Transverse colon (tissue), 4 donors: ENCODE measurements at regions of chr13 and their contacts with region 1.

Region 1: DNA sequence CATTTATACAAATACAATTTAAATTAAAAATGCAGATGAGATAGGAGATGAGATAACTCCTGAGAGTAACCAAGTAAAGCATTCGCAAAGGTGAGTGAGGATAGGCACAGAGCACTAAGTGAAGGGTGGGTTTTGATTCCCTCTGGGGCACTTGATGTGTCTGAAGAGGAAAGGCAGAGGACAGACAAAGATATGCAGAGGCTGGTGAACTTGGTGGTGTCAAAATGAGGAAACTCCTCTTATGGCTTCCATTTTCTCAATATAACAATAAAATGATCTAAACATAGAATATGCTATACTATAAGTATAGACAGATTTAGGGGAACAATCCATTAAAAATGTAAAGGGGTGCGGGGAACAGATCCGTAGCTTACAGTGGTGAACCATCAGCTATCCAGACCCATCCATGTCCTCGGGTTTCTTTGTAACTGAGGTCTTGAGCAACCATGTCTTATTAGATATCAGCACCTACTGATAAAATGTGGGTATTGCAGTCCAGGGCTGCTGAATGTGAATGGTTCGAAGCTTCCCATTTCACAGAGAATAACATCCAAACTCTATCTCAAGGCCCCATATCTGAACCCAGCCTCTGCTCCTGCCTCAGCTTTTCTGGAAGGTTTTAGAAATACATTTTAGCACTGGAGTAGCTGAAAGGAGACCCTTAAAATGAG is 73.9 kb upstream of the SLC10A2 start:
- DNase-seq: no peak
- H3K4me3 ChIP-seq: no peak overlapping the region
- H3K27ac ChIP-seq: no peak overlapping the region
- H3K4me1 ChIP-seq: no peaks in the 10 kb centered on the region
- H3K27me3 ChIP-seq: no peaks in the 10 kb centered on the region
- CTCF ChIP-seq: peak; percentile 33 to 45 (median 39)
- EP300 ChIP-seq: no peak
- POLR2A ChIP-seq: no peak

Region 2: DNA sequence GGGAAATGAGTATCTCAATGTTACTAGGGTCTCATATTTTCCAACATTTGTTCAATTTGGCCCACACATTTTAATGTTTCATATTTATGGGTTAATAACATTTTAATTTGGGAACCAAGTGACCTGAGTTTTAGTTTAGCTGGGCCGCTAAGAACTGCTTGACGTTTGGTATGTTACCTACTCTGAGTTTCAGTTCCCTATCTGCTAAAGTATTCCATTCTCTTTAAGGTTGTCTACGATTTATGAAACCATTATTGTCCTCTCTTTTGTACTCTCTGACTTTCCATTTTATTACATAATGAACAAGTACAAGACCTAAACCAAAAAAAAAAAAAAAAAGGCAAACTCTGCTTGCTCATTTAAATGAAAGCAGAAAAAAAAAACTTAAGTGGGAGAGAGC is 828.2 kb before region 1 on chr13:
- in situ Hi-C with region 1: no loop called
- intact Hi-C with region 1: no loop called
- DNase-seq: no peak
- H3K4me3 ChIP-seq: no peak overlapping the region
- H3K27ac ChIP-seq: no peak overlapping the region
- H3K4me1 ChIP-seq: no peaks in the 10 kb centered on the region
- H3K27me3 ChIP-seq: no peaks in the 10 kb centered on the region
- CTCF ChIP-seq: no peak
- EP300 ChIP-seq: no peak
- POLR2A ChIP-seq: no peak

Region 3: DNA sequence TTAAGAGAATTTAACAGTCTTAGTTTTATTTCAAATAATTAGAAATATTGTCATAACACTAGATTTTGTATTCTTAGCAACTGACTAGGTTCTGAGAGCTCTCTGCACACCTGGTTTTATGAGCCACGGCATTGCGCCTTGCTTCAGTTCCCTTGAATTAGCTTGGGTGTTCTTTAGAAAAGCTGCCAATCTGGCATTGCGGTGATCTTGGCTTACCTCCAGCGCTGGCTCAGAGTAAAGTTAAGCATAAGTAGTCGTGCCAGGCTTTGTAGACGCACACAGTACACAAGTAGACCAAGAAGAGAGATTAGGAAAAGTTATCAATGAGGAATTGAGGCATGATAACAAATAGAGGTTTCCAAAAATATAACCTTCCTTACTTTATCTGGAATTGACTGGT is 497.7 kb before region 1 on chr13:
- in situ Hi-C with region 1: no loop called
- intact Hi-C with region 1: no loop called
- DNase-seq: peak; percentile 61
- H3K4me3 ChIP-seq: no peak overlapping the region
- H3K27ac ChIP-seq: no peak overlapping the region
- H3K4me1 ChIP-seq: no peaks in the 10 kb centered on the region
- H3K27me3 ChIP-seq: no peaks in the 10 kb centered on the region
- CTCF ChIP-seq: no peak
- EP300 ChIP-seq: no peak
- POLR2A ChIP-seq: no peak

Region 4: GRCh38 chr13:102903659-102904407 is 236.3 kb before region 1 on chr13:
- in situ Hi-C with region 1: loop called in 1 of 4 experiments (anchors 25 kb)
- intact Hi-C with region 1: no loop called
- DNase-seq: no peak
- H3K4me3 ChIP-seq: no peak overlapping the region
- H3K27ac ChIP-seq: no peak overlapping the region
- H3K4me1 ChIP-seq: peaks cover 0 to 20% (median 7%) of the 10 kb centered on the region in 4 donors
- H3K27me3 ChIP-seq: no peaks in the 10 kb centered on the region
- CTCF ChIP-seq: peak; percentile 31 to 42 (median 41)
- EP300 ChIP-seq: no peak
- POLR2A ChIP-seq: no peak

Region 5: GRCh38 chr13:102913914-102914313 is 226.2 kb before region 1 on chr13:
- in situ Hi-C with region 1: loop called in 2 of 4 experiments (anchors 10 to 25 kb)
- intact Hi-C with region 1: no loop called
- DNase-seq: peak; percentile 17
- H3K4me3 ChIP-seq: no peak overlapping the region
- H3K27ac ChIP-seq: no peak overlapping the region
- H3K4me1 ChIP-seq: peaks cover 0 to 4% (median 0%) of the 10 kb centered on the region in 4 donors
- H3K27me3 ChIP-seq: peaks cover 12% of the 10 kb centered on the region
- CTCF ChIP-seq: no peak
- EP300 ChIP-seq: no peak
- POLR2A ChIP-seq: no peak

Region 6: DNA sequence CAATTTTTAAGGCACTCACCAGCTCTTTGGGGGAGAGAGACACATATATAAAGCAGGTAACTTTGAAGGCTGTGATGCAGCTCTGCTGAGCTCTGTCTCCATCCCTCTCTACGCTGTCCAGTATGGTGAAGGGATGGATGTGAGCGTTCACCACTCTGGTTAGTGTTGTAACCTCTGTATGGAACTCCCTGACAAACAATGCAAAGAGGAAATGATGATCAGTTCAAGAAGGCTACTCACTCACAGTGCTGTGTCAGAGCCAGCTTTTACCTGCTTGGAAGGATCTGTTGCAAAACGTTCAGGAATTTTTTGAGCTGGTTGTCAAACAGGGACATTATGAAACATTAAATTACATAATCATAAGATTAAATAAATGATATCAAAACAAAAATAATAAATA is 16.9 kb after region 1 on chr13:
- in situ Hi-C with region 1: no loop called
- intact Hi-C with region 1: no loop called
- DNase-seq: no peak
- H3K4me3 ChIP-seq: no peak overlapping the region
- H3K27ac ChIP-seq: no peak overlapping the region
- H3K4me1 ChIP-seq: no peaks in the 10 kb centered on the region
- H3K27me3 ChIP-seq: no peaks in the 10 kb centered on the region
- CTCF ChIP-seq: no peak
- EP300 ChIP-seq: no peak
- POLR2A ChIP-seq: no peak